ENCODE measurements at regions of chr6 and their contacts with region 1.

Region 1: DNA sequence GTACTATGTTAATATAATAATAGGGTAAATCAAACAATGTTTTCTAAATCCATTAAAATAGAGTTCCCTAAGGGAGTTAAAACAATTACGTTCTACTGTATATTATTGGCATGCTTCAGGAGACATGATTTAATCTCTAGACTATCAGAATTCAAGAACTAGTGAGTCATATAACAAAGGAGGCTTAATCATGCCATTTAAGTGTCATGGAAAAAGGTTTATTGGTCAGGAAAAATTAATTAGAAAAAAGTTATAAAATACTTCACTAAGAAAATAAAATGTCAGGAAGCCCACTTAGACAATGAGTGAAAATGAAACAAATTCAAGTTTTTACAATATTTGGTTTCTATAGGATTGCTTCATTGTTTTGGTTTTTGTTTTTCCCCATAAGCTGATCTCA is 34.7 kb downstream of the HCRTR2 start:
- DNase-seq: no peak
- ATAC-seq: no peak
- H3K4me3 ChIP-seq: no peak overlapping the region
- H3K27ac ChIP-seq: no peak overlapping the region
- H3K4me1 ChIP-seq: no peaks in the 10 kb centered on the region
- H3K27me3 ChIP-seq: peaks cover under 1% of the 10 kb centered on the region; the same call in 1 of the 2 replicates
- CTCF ChIP-seq: no peak
- POLR2A ChIP-seq: no peak
- RAD21 ChIP-seq: no peak

Region 2: DNA sequence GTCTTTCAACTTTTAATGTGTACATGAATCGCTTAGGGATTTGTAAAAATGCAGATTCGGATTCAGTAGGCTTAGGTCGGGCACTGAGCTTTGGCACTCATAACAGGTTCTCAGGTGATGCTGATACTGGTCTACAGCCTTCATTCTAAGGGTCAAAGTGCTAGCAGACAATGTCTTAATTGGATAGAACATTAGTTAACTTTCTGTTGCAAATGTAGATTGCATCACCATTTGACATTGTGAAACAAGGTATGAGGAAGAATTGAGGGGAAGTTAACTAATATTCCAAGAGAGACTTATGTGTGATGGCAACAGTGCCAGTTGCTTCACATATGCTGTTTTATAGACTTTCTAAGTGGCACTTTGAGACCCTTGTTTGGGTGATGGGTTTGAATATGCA is 1010.9 kb before region 1 on chr6:
- CTCF ChIA-PET with region 1: no interaction called
- POLR2A ChIA-PET with region 1: no interaction called
- dilution Hi-C with region 1: no loop called
- in situ Hi-C with region 1: no loop called
- intact Hi-C with region 1: no loop called
- DNase-seq: no peak
- ATAC-seq: no peak
- H3K4me3 ChIP-seq: no peak overlapping the region
- H3K27ac ChIP-seq: no peak overlapping the region
- H3K4me1 ChIP-seq: peaks cover 4% of the 10 kb centered on the region; the same call in 1 of the 2 replicates
- H3K27me3 ChIP-seq: no peaks in the 10 kb centered on the region
- CTCF ChIP-seq: no peak
- POLR2A ChIP-seq: no peak
- RAD21 ChIP-seq: no peak

Region 3: GRCh38 chr6:54665278-54665677 is 543.8 kb before region 1 on chr6:
- CTCF ChIA-PET with region 1: interaction called, 10 read pairs
- POLR2A ChIA-PET with region 1: no interaction called
- dilution Hi-C with region 1: no loop called
- in situ Hi-C with region 1: no loop called
- intact Hi-C with region 1: no loop called
- DNase-seq: no peak
- ATAC-seq: no peak
- H3K4me3 ChIP-seq: no peak overlapping the region
- H3K27ac ChIP-seq: no peak overlapping the region
- H3K4me1 ChIP-seq: no peaks in the 10 kb centered on the region
- H3K27me3 ChIP-seq: no peaks in the 10 kb centered on the region; the same call in 1 of the 2 replicates
- CTCF ChIP-seq: no peak
- POLR2A ChIP-seq: no peak
- RAD21 ChIP-seq: no peak

Region 4: DNA sequence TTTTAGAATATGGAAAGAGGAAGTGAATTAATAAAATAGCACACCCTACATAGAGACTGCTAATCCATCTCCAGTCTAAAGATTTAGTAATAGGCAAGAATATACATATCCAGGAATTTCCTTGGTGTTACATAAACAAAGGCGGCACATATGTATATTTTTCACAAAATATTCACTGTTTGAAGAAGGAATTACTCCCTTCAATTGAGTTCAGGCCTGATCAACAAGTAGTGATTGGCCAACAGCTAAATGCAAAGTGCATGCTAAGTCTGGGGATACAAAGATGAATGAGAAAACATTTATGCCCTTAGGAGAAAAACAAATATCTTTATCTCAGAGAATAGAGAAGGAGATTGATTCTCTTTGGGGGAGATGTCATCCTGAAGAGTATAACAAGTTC is 41.2 kb before region 1 on chr6:
- CTCF ChIA-PET with region 1: no interaction called
- POLR2A ChIA-PET with region 1: no interaction called
- dilution Hi-C with region 1: no loop called
- in situ Hi-C with region 1: no loop called
- intact Hi-C with region 1: no loop called
- DNase-seq: no peak
- ATAC-seq: no peak
- H3K4me3 ChIP-seq: no peak overlapping the region
- H3K27ac ChIP-seq: no peak overlapping the region
- H3K4me1 ChIP-seq: no peaks in the 10 kb centered on the region
- H3K27me3 ChIP-seq: no peaks in the 10 kb centered on the region; the same call in 1 of the 2 replicates
- CTCF ChIP-seq: no peak
- POLR2A ChIP-seq: no peak
- RAD21 ChIP-seq: no peak

Measured in IMR-90 (cell line).